Activated naive CD4-positive, alpha-beta T cell treated with anti-CD3 and anti-CD28 coated beads for 36 hours (primary cell): ENCODE measurements at regions of chr10 and their contacts with region 1.

Region 1: GRCh38 chr10:62816331-62817120 is at the start of gene EGR2:
- DNase-seq: peak; percentile 98
- H3K4me3 Mint-ChIP-seq: peak within 1 kb of the TSS; percentile 95
- H3K27ac Mint-ChIP-seq: peak within 1 kb of the TSS; percentile 98
- H3K4me1 Mint-ChIP-seq: peaks cover 41% of the 10 kb centered on the region
- H3K27me3 Mint-ChIP-seq: peaks cover 14% of the 10 kb centered on the region
- total RNA-seq, gene EGR2: 18.5 to 21.4 TPM

Region 2: DNA sequence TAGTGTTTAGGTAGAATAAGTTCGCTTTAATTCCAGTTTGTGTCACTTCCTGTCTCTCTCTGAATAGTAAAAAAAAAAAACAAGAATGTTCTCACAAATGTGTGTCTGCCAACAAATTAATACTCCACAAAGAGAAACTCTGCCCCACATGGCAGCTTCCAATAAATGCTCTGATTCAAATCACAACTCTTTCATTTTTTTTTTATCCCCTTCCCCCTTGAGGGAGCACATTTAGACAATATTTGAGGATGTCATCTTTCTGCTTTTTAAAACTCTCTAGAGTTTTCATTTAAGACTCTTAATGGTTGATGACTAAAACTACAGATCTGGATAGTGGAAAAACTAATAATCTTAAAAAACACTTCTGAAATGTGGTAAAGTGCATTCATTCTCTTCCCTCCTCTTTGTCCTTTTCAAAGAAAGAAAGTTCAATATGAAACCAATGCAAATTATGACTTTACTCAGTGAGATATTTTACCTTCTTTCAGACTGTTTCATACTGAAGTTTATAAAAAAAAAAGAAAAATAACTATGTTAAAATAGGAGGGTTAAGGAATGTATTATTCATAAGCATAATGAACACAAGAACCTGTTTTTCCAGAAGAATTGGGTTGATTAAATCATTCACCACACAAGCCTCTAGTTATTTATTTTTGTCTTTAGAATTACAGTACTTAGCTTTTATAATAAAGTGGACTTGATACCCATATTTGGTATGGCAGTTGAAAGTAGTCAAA is 872.7 kb before region 1 on chr10:
- CTCF ChIA-PET with region 1: no interaction called
- intact Hi-C with region 1: loop called (anchors 2 kb)
- DNase-seq: peak; percentile 47
- H3K4me3 Mint-ChIP-seq: peak overlapping the region; percentile 62
- H3K27ac Mint-ChIP-seq: peak overlapping the region; percentile 98
- H3K4me1 Mint-ChIP-seq: peaks cover 71% of the 10 kb centered on the region
- H3K27me3 Mint-ChIP-seq: no peaks in the 10 kb centered on the region

Region 3: DNA sequence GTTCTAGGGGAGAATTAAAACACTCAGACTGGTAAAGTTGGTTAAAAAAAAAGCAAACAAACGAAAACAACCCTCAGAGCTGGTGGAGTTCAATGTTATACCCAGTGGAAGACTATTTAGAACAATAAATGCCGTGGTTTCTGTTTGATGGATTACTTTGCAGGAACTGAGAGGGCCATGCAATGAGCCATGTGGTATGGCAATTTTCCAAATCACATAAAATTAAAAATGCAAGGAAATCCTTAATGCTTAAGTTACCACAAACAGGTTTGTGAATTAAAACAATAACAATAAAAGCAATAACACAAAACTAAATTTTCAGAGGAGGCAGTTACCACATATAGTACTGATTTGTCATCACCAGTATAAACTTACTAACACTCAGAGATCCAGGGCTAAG is 644.7 kb before region 1 on chr10:
- CTCF ChIA-PET with region 1: no interaction called
- intact Hi-C with region 1: no loop called
- DNase-seq: no peak
- H3K4me3 Mint-ChIP-seq: no peak overlapping the region
- H3K27ac Mint-ChIP-seq: no peak overlapping the region
- H3K4me1 Mint-ChIP-seq: peaks cover 20% of the 10 kb centered on the region
- H3K27me3 Mint-ChIP-seq: no peaks in the 10 kb centered on the region

Region 4: GRCh38 chr10:62426086-62426485 is 390.4 kb before region 1 on chr10:
- CTCF ChIA-PET with region 1: no interaction called
- intact Hi-C with region 1: loop called (anchors 1 kb)
- DNase-seq: peak; percentile 64
- H3K4me3 Mint-ChIP-seq: no peak overlapping the region
- H3K27ac Mint-ChIP-seq: peak overlapping the region; percentile 12
- H3K4me1 Mint-ChIP-seq: peaks cover 28% of the 10 kb centered on the region
- H3K27me3 Mint-ChIP-seq: no peaks in the 10 kb centered on the region

Region 5: DNA sequence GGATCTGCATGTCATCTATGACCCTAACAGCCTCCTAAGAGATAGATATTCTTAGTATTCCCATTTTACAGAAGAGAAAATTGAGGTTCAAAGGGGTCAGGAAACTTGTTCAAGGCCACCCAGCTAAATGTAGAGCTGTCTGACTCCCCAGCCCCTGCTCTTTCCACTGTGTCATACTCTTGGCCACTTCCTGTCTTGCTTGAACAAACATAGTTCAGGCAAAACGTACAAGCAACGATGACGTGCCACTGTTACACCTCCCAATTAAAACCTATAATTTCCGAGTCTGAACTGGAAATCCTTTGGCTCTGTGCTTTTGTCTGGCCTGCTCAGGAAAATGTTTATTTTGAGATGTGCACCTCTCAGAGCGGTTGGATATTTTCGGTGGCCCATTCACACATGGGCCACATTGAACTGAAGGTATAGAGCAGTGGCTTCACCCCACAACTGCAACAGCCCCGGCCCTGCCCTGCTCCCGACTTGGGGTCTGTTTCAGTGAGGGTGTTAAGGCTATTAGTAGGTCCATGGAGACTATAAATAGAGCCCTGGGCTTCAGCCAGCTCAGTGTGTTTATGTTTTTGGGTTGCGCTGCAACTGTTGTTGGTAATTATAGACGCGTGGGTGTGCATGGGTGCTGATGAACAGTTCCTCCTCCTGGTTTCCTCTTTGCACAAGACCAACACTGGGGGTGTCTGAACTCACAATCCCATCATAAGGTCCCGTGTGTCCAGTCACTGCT is 184.3 kb before region 1 on chr10:
- CTCF ChIA-PET with region 1: interaction called, 26 read pairs
- intact Hi-C with region 1: loop called (anchors 1 kb)
- DNase-seq: peak; percentile 69
- H3K4me3 Mint-ChIP-seq: no peak overlapping the region
- H3K27ac Mint-ChIP-seq: peak overlapping the region; percentile 14
- H3K4me1 Mint-ChIP-seq: peaks cover 19% of the 10 kb centered on the region
- H3K27me3 Mint-ChIP-seq: no peaks in the 10 kb centered on the region

Region 6: DNA sequence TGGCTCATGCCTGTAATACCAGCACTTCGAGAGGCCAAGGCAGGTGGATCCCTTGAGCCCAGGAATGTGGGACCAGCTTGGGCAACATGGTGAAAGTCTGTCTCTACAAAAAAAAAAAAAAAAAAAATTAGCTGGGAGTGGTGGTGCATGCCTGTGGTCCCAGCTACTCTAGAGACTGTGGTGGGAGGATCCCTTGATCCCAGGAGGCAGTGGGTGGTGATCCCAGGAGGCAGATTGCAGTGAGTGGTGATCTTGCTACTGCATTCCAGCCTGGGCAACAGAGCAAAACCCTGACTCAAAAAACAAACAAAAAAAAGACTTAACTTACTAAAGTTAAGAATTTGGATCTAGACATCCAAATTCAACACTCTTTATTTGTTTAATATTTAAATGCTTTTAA is 22.2 kb before region 1 on chr10:
- CTCF ChIA-PET with region 1: no interaction called
- intact Hi-C with region 1: no loop called
- DNase-seq: no peak
- H3K4me3 Mint-ChIP-seq: no peak overlapping the region
- H3K27ac Mint-ChIP-seq: no peak overlapping the region
- H3K4me1 Mint-ChIP-seq: peaks cover 4% of the 10 kb centered on the region
- H3K27me3 Mint-ChIP-seq: peaks cover 18% of the 10 kb centered on the region

Region 7: GRCh38 chr10:62804356-62805230 is 11.9 kb before region 1 on chr10 and contains the start of gene ADO:
- CTCF ChIA-PET with region 1: interaction called, 8 read pairs
- intact Hi-C with region 1: loop called (anchors 1 kb)
- DNase-seq: peak; percentile 82
- H3K4me3 Mint-ChIP-seq: peak within 1 kb of the TSS; percentile 97
- H3K27ac Mint-ChIP-seq: peak within 1 kb of the TSS; percentile 100
- H3K4me1 Mint-ChIP-seq: peaks cover 37% of the 10 kb centered on the region
- H3K27me3 Mint-ChIP-seq: no peaks in the 10 kb centered on the region
- total RNA-seq, gene ADO: 24.9 to 26.2 TPM

Region 8: GRCh38 chr10:63115732-63116383 is 299.3 kb after region 1 on chr10:
- CTCF ChIA-PET with region 1: no interaction called
- intact Hi-C with region 1: no loop called
- DNase-seq: no peak
- H3K4me3 Mint-ChIP-seq: no peak overlapping the region
- H3K27ac Mint-ChIP-seq: no peak overlapping the region
- H3K4me1 Mint-ChIP-seq: no peaks in the 10 kb centered on the region
- H3K27me3 Mint-ChIP-seq: peaks cover 3% of the 10 kb centered on the region

Region 9: GRCh38 chr10:63157845-63158624 is 341.5 kb after region 1 on chr10:
- CTCF ChIA-PET with region 1: interaction called, 3 read pairs
- intact Hi-C with region 1: loop called (anchors 1 kb)
- DNase-seq: peak; percentile 67
- H3K4me3 Mint-ChIP-seq: no peak overlapping the region
- H3K27ac Mint-ChIP-seq: no peak overlapping the region
- H3K4me1 Mint-ChIP-seq: peaks cover 11% of the 10 kb centered on the region
- H3K27me3 Mint-ChIP-seq: no peaks in the 10 kb centered on the region